ENCODE measurements at regions of chr6 and their contacts with region 1.

Region 1: DNA sequence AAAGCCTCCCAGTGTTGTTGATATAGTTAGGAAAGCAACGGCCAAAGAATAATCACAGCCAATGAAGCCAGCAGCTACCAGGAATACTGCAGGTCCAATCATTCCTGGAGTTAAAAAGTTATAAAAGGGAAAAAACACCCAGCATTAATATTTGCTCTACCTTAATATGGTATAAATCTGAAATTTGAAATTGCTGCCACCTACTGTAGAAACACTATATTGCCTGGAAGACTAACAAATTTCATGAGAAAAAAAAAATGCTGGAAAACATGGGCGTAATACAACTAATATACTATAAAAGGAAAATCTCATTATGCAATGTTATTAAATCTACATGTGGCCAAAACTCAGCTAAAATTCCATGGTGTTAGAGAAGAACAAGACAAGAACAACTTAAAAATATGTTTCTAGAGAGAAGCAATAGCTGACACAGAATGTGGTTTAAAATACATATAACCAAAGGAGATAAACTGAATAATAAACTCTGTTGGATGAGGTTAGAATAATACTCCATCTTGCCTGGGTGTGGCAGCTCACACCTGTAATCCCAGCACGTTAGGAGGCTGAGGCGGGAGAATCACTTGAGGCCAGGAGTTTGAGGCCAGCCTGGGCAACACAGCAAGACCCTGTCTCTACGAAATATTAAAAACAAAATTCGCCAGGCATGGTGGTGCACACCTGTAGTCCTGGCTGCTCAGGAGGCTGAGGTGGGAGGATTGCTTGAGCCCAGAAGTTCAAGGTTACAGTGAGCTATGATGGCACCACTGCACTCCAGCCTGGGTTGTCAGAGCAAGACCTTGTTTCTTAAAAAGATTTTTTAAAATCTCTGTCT is 43.1 kb downstream of the SLC17A5 start:
- DNase-seq: peak; percentile 63
- ATAC-seq: peak; percentile 77
- H3K4me3 ChIP-seq: no peak overlapping the region; a peak in 1 of 4 replicates
- H3K27ac ChIP-seq: peak overlapping the region; percentile 72
- H3K4me1 ChIP-seq: peaks cover 19% of the 10 kb centered on the region
- H3K27me3 ChIP-seq: no peaks in the 10 kb centered on the region
- CTCF ChIP-seq: peak; percentile 80; the same call in 1 of the 2 replicates

Region 2: DNA sequence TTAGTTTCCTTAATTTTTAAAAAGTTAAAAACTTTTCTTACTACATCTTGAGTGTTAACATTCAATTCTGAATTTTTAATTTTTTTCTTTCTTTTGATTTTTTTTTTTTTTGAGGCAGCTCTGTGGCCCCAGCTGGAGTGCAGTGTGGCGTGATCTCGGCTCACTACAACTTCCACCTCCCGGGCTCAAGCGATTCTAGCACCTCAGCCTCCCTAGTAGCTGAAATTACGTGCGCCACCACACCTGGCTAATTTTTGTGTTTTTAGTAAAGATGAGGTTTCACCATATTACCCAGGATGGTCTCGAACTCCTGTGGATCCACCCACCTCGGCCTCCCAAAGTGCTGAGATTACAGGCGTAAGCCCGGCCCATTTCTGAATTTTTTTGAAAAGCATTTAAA is 214.8 kb before region 1 on chr6:
- CTCF ChIA-PET with region 1: no interaction called
- POLR2A ChIA-PET with region 1: no interaction called
- in situ Hi-C with region 1: no loop called
- intact Hi-C with region 1: no loop called
- DNase-seq: no peak
- ATAC-seq: no peak
- H3K4me3 ChIP-seq: peak overlapping the region; percentile 62 to 78
- H3K27ac ChIP-seq: peak overlapping the region; percentile 90
- H3K4me1 ChIP-seq: peaks cover 14% of the 10 kb centered on the region
- H3K27me3 ChIP-seq: no peaks in the 10 kb centered on the region
- CTCF ChIP-seq: no peak

Region 3: GRCh38 chr6:73491377-73491776 is 119.3 kb before region 1 on chr6:
- CTCF ChIA-PET with region 1: no interaction called
- POLR2A ChIA-PET with region 1: no interaction called
- in situ Hi-C with region 1: loop called (anchors 25 kb)
- intact Hi-C with region 1: no loop called
- DNase-seq: no peak
- ATAC-seq: no peak
- H3K4me3 ChIP-seq: no peak overlapping the region
- H3K27ac ChIP-seq: no peak overlapping the region
- H3K4me1 ChIP-seq: no peaks in the 10 kb centered on the region
- H3K27me3 ChIP-seq: no peaks in the 10 kb centered on the region
- CTCF ChIP-seq: no peak